Activated naive CD4-positive, alpha-beta T cell treated with anti-CD3 and anti-CD28 coated beads for 36 hours (primary cell): ENCODE measurements at regions of chr3 and their contacts with region 1.

Region 1: GRCh38 chr3:71226565-71227269 is 356.8 kb downstream of the FOXP1 start:
- DNase-seq: peak; percentile 95
- H3K4me3 Mint-ChIP-seq: peak overlapping the region; percentile 77
- H3K27ac Mint-ChIP-seq: peak overlapping the region; percentile 94
- H3K4me1 Mint-ChIP-seq: peaks cover 83% of the 10 kb centered on the region
- H3K27me3 Mint-ChIP-seq: no peaks in the 10 kb centered on the region

Region 2: DNA sequence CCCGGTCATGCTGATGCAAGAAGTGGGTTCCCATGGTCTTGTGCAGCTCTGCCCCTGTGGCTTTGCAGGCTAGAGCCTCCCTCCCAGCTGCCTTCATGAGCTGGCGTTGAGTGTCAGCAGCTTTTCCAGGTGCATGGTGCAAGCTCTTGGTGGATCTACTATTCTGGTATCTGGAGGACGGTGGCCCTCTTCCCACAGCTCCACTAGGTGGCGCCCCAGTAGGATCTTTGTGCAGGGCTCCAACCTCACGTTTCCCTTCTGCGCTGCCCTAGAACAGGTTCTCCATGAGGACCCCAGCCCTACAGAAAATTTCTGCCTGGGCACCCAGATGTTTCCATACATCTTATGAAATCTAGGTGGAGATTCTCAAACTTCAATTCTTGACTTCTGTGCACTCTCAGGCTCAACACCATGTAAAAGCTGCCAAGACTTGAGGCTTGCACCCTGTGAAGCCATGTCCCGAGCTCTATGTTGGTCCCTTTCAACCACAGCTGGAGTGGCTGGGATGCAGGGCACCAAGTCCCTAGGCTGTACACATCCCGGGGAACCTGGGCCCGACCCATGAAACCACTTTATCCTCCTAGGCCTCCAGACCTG is 675.9 kb before region 1 on chr3:
- CTCF ChIA-PET with region 1: no interaction called
- intact Hi-C with region 1: loop called (anchors 1 kb)
- DNase-seq: peak; percentile 88
- H3K4me3 Mint-ChIP-seq: no peak overlapping the region
- H3K27ac Mint-ChIP-seq: no peak overlapping the region
- H3K4me1 Mint-ChIP-seq: no peaks in the 10 kb centered on the region
- H3K27me3 Mint-ChIP-seq: no peaks in the 10 kb centered on the region

Region 3: GRCh38 chr3:71064288-71064955 is 162.3 kb before region 1 on chr3:
- CTCF ChIA-PET with region 1: interaction called, 3 read pairs
- intact Hi-C with region 1: loop called (anchors 1 kb)
- DNase-seq: peak; percentile 69
- H3K4me3 Mint-ChIP-seq: no peak overlapping the region
- H3K27ac Mint-ChIP-seq: no peak overlapping the region
- H3K4me1 Mint-ChIP-seq: peaks cover 51% of the 10 kb centered on the region
- H3K27me3 Mint-ChIP-seq: no peaks in the 10 kb centered on the region

Region 4: DNA sequence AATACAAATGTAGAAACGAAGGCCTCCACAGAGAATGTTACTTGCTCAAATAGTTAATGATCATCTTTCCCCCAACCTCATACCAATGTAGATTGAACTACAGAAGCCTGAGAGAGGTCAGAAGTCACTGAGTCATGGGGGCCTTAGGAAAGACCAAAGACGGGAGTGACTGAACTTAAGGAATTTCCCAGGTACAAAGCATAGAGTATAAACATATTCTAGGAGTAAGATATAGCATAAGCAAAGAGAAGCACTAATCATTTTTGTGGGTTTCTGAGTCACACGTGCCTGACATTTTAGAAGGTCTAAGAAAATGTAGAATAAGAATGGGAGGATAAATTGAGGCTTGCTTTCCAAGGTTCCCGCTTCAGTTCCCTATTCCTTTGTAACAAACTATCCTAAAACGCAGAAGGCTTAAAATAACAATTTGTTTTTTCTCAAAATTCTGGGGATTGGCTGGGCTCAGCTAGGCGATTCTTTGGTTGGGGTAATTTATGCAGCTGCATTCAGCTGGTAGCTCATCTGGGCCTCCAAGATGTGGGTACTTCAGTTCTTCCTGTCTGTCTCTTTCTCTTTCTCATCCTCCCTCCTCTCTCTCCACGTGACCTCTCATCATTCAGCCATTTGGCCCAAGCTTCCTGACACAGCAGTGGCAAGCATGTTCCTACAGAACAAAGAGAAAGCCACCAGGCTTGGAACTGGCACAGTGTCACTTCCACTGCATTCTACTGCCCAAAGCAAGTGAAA is 65.7 kb before region 1 on chr3:
- CTCF ChIA-PET with region 1: no interaction called
- intact Hi-C with region 1: loop called (anchors 1 kb)
- DNase-seq: peak; percentile 44
- H3K4me3 Mint-ChIP-seq: peak overlapping the region; percentile 33
- H3K27ac Mint-ChIP-seq: peak overlapping the region; percentile 88
- H3K4me1 Mint-ChIP-seq: peaks cover 79% of the 10 kb centered on the region
- H3K27me3 Mint-ChIP-seq: no peaks in the 10 kb centered on the region

Region 5: GRCh38 chr3:71262364-71263265 is 35.9 kb after region 1 on chr3:
- CTCF ChIA-PET with region 1: no interaction called
- intact Hi-C with region 1: no loop called
- DNase-seq: no peak
- H3K4me3 Mint-ChIP-seq: peak overlapping the region; percentile 55
- H3K27ac Mint-ChIP-seq: peak overlapping the region; percentile 74
- H3K4me1 Mint-ChIP-seq: peaks cover 70% of the 10 kb centered on the region
- H3K27me3 Mint-ChIP-seq: no peaks in the 10 kb centered on the region

Region 6: DNA sequence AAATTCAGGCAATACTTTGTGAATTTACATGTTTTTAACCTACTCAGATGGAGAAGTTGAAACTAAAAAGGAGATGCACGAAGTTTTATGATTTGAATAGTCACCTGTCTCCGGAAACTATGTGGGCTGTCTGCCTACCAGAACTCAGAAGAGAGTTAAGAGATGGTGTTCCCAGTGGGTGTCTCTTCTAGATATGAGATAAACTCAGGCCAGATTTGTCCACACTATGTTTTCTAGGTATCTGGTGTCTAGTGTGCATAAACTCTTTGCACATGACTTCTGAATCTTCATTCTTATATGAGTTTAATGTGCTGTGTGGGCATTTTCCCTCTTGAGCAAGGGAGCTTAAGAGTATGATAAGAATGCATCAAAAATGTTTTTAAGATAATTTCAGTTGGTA is 134.0 kb after region 1 on chr3:
- CTCF ChIA-PET with region 1: interaction called, 3 read pairs
- intact Hi-C with region 1: loop called (anchors 1 kb)
- DNase-seq: peak; percentile 43
- H3K4me3 Mint-ChIP-seq: peak overlapping the region; percentile 48
- H3K27ac Mint-ChIP-seq: peak overlapping the region; percentile 70
- H3K4me1 Mint-ChIP-seq: peaks cover 82% of the 10 kb centered on the region
- H3K27me3 Mint-ChIP-seq: no peaks in the 10 kb centered on the region

Region 7: DNA sequence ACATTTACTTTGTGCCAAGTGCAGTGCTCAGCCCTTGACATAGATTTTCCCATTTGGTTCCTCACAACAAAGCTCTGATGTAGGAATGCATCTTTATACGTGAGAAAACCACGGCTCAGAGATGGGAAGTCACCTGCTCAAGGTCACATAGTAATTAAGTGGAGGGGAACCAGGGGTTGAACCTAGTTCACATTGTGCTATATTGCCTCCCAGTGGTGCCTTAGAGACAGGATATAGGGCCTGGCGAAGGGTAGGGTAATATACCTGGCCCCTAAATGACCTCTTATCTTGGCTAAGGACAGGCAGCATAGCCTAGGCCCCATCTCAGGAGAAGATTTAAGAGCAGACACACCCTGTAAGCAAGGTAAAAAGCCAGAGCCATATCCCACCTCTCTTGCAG is 285.3 kb after region 1 on chr3:
- CTCF ChIA-PET with region 1: interaction called, 4 read pairs
- intact Hi-C with region 1: loop called (anchors 1 kb)
- DNase-seq: peak; percentile 59
- H3K4me3 Mint-ChIP-seq: no peak overlapping the region
- H3K27ac Mint-ChIP-seq: peak overlapping the region; percentile 6
- H3K4me1 Mint-ChIP-seq: peaks cover 12% of the 10 kb centered on the region
- H3K27me3 Mint-ChIP-seq: no peaks in the 10 kb centered on the region